CD8-positive, alpha-beta T cell (primary cell): ENCODE measurements at regions of chr11 and their contacts with region 1.

Region 1: GRCh38 chr11:128630367-128631230 is 43.2 kb upstream of the ETS1 start:
- DNase-seq: peak; percentile 85 to 96 (median 93)
- ATAC-seq: peak; percentile 75
- H3K4me3 ChIP-seq: no peak overlapping the region
- H3K4me3 Mint-ChIP-seq: peak overlapping the region; percentile 61
- H3K27ac ChIP-seq: peak overlapping the region in 1 of 2 experiments; percentile 38
- H3K27ac Mint-ChIP-seq: peak overlapping the region; percentile 98
- H3K4me1 ChIP-seq: peaks cover 67% of the 10 kb centered on the region
- H3K4me1 Mint-ChIP-seq: peaks cover 65% of the 10 kb centered on the region
- H3K27me3 ChIP-seq: no peaks in the 10 kb centered on the region
- H3K27me3 Mint-ChIP-seq: no peaks in the 10 kb centered on the region
- CTCF ChIP-seq: peak; percentile 82

Region 2: DNA sequence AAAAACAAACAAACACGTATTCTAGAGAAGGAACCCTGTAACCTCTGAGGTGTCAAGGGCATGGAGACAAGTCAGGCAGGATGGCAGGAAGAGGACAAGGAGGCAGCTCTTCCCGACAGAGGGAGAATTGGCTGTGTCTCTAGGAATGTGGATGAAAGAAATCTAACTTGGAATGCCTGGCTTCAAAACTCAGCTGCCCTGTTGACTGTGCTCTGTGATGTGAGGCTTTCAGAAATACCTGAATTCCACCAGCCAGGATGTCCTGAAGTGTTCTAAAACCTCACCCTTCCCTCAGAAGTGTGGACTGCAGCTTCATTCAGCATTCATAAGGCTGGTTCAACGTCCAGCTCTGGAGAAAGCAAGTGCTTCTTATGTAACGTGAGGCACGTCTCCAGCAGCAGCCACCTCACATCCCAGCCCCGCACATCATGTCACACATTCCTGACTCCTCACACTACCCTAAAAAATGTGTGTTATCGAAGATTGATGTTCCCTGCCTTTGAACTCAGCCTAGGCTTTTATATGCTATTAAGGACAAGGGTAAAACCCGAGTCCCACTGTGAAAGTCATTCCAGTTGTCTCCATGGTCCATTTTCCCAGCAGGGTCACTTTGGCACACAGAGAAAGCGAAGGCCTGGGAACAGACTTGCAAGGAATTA is 442.1 kb before region 1 on chr11:
- CTCF ChIA-PET with region 1: interaction called, 31 read pairs
- POLR2A ChIA-PET with region 1: interaction called, 4 read pairs
- intact Hi-C with region 1: no loop called
- DNase-seq: no peak
- ATAC-seq: no peak
- H3K4me3 ChIP-seq: no peak overlapping the region
- H3K4me3 Mint-ChIP-seq: no peak overlapping the region
- H3K27ac ChIP-seq: peak overlapping the region in 1 of 2 experiments; percentile 4
- H3K27ac Mint-ChIP-seq: no peak overlapping the region
- H3K4me1 ChIP-seq: peaks cover 21% of the 10 kb centered on the region
- H3K4me1 Mint-ChIP-seq: peaks cover 19% of the 10 kb centered on the region
- H3K27me3 ChIP-seq: no peaks in the 10 kb centered on the region
- H3K27me3 Mint-ChIP-seq: no peaks in the 10 kb centered on the region
- CTCF ChIP-seq: no peak

Region 3: DNA sequence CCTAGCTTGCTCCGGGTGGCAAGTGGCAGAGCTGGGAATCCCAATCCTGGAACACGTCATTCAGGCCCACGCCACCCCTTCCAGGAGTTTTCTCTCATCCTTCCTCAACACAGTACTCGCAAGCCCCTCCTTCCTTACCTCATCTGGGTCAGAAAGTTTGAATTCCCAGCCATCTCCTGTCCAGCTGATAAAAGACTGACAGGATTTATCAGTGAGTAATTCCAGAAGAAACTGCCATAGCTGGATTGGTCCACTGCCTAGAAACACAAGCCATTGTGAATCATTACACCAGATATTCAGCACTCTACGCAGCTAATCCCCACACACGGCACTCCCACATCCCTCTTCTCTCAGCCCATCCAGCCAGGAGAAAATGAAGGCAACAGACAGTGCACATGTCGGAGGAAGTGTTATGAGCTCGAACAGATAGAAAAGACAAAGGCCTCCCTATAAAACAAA is 167.2 kb before region 1 on chr11:
- CTCF ChIA-PET with region 1: interaction called, 20 read pairs
- POLR2A ChIA-PET with region 1: interaction called, 4 read pairs
- intact Hi-C with region 1: loop called in 1 of 2 experiments (anchors 2 kb)
- DNase-seq: peak in 1 of 9 experiments; percentile 19
- ATAC-seq: no peak
- H3K4me3 ChIP-seq: no peak overlapping the region
- H3K4me3 Mint-ChIP-seq: peak overlapping the region; percentile 70
- H3K27ac ChIP-seq: peak overlapping the region; percentile 68 to 88
- H3K27ac Mint-ChIP-seq: peak overlapping the region; percentile 94
- H3K4me1 ChIP-seq: peaks cover 89% of the 10 kb centered on the region
- H3K4me1 Mint-ChIP-seq: peaks cover 97% of the 10 kb centered on the region
- H3K27me3 ChIP-seq: no peaks in the 10 kb centered on the region
- H3K27me3 Mint-ChIP-seq: no peaks in the 10 kb centered on the region
- CTCF ChIP-seq: no peak

Region 4: GRCh38 chr11:128506999-128507611 is 123.5 kb before region 1 on chr11:
- CTCF ChIA-PET with region 1: interaction called, 140 read pairs
- POLR2A ChIA-PET with region 1: interaction called, 32 read pairs
- intact Hi-C with region 1: loop called in 1 of 2 experiments (anchors 2 kb)
- DNase-seq: peak in 4 of 9 experiments; percentile 51 to 65 (median 60)
- ATAC-seq: peak; percentile 30
- H3K4me3 ChIP-seq: peak overlapping the region; percentile 37 to 94
- H3K4me3 Mint-ChIP-seq: peak overlapping the region; percentile 84
- H3K27ac ChIP-seq: peak overlapping the region; percentile 48 to 75
- H3K27ac Mint-ChIP-seq: peak overlapping the region; percentile 98
- H3K4me1 ChIP-seq: peaks cover 100% of the 10 kb centered on the region
- H3K4me1 Mint-ChIP-seq: peaks cover 97% of the 10 kb centered on the region
- H3K27me3 ChIP-seq: no peaks in the 10 kb centered on the region
- H3K27me3 Mint-ChIP-seq: no peaks in the 10 kb centered on the region
- CTCF ChIP-seq: no peak

Region 5: DNA sequence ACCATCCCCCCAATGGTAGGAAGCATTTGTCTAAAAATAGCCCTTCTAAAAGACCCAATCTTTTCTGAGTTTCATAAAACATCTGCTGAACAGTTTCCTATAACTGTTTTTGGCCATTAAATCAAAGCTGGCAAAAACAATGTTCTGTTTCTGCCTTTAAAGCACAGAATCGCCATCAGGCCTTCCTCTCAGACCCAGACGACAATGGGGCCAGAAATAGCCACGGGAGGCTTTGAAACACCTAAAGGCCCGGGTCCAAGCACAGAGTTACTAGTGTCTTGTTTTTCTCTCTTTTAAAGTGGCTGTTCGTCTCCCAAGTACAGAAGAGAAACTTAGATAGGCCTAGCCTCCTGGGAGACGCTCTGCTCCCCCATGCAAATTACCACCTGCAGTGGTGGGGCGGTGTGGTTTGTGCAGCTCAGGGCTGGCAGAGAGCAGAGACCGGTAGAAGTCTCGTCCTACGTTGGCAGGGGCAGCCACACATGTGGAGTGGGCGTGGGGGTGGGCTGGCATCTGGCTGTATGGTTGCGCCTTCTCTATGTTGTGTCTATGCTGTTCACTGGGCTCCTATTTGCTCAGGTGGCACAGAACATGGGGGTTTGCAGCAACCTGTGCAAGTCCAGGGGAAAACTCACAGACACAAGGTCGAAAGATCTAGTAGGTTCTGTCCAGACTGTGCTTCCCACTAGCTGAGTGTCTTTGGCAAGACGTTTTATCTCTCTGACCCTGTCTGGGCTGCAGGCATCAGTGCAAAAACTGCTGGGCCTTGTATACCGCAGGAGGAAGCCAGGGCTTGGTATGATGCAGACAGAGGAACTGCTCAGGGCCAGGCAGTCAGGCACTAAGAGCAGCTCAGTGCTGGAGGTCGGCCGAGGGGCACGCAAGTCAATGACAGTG is 19.6 kb before region 1 on chr11:
- CTCF ChIA-PET with region 1: interaction called, 31 read pairs
- POLR2A ChIA-PET with region 1: interaction called, 3 read pairs
- intact Hi-C with region 1: no loop called
- DNase-seq: peak; percentile 50 to 87 (median 74)
- ATAC-seq: peak; percentile 88
- H3K4me3 ChIP-seq: peak overlapping the region in 1 of 2 experiments; percentile 9
- H3K4me3 Mint-ChIP-seq: peak overlapping the region; percentile 57
- H3K27ac ChIP-seq: peak overlapping the region; percentile 50 to 70
- H3K27ac Mint-ChIP-seq: peak overlapping the region; percentile 92
- H3K4me1 ChIP-seq: peaks cover 63% of the 10 kb centered on the region
- H3K4me1 Mint-ChIP-seq: peaks cover 87% of the 10 kb centered on the region
- H3K27me3 ChIP-seq: no peaks in the 10 kb centered on the region
- H3K27me3 Mint-ChIP-seq: no peaks in the 10 kb centered on the region
- CTCF ChIP-seq: no peak

Region 6: DNA sequence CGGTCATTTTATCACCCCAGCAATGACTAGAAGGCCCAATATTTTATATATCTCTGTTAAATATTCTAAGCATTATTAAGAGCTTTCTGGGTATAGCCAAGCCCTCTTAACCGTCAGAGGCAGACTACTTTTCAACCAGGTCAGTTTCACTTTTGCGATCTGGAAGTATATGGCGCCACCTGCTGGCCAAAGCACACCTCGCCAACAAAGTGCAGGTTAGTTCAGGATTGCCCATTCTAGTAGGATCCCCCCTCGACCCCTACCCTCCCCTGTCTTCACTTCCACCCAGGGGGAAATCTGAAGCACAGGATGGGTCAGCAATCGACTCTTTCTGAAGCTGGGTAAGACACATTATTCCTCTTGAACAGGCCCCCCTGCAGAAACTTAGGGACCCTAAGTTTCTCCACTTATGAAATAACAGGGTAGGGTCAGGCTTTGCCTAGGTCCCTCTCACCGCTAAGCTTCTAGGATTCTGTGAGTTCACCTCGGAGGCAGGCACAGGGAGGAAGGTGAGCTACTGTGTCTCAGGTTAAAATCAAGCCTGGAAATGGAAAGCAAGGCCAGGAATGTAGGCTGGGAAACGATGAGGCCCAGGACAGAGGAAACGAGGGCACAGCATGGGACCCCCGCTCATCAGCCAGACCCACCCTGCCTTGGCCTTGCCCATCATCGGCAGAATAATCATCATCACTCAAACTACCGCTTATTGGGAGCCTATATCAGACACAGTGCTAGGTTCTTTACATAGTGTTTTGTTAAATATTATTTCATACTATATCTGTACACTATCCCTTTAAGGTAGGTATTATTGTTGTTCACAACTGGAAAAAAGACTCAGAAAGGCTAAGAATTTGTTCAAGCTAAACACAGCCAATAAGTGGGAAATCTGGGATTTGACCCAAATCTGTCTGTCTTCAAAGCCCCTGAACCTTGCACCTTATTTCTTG is 200.8 kb after region 1 on chr11:
- CTCF ChIA-PET with region 1: interaction called, 85 read pairs
- POLR2A ChIA-PET with region 1: interaction called, 5 read pairs
- intact Hi-C with region 1: loop called (anchors 1 kb)
- DNase-seq: peak; percentile 75 to 93 (median 88)
- ATAC-seq: peak; percentile 81
- H3K4me3 ChIP-seq: peak overlapping the region; percentile 11 to 26
- H3K4me3 Mint-ChIP-seq: peak overlapping the region; percentile 55
- H3K27ac ChIP-seq: peak overlapping the region; percentile 31 to 84
- H3K27ac Mint-ChIP-seq: peak overlapping the region; percentile 80
- H3K4me1 ChIP-seq: peaks cover 9% of the 10 kb centered on the region
- H3K4me1 Mint-ChIP-seq: peaks cover 18% of the 10 kb centered on the region
- H3K27me3 ChIP-seq: no peaks in the 10 kb centered on the region
- H3K27me3 Mint-ChIP-seq: no peaks in the 10 kb centered on the region
- CTCF ChIP-seq: peak; percentile 87